Activated T-helper 2 cell treated with anti-CD3 and anti-CD28 coated beads, Interferon-gamma antibody, Interleukin-2, Interleukin-4, amounts not matched to agents 10 μg/mL and 5 μg/mL and 100 μg/mL, durations not matched to agents 14 hours and 24 hours and 36 hours (primary cell): ENCODE measurements at regions of chr5 and their contacts with region 1.

Region 1: GRCh38 chr5:143435210-143435657 is 31.7 kb upstream of the NR3C1 start:
- DNase-seq: no peak
- H3K4me3 Mint-ChIP-seq: peak overlapping the region; percentile 80
- H3K27ac Mint-ChIP-seq: peak overlapping the region; percentile 89
- H3K4me1 Mint-ChIP-seq: peaks cover 60% of the 10 kb centered on the region
- H3K27me3 Mint-ChIP-seq: no peaks in the 10 kb centered on the region

Region 2: DNA sequence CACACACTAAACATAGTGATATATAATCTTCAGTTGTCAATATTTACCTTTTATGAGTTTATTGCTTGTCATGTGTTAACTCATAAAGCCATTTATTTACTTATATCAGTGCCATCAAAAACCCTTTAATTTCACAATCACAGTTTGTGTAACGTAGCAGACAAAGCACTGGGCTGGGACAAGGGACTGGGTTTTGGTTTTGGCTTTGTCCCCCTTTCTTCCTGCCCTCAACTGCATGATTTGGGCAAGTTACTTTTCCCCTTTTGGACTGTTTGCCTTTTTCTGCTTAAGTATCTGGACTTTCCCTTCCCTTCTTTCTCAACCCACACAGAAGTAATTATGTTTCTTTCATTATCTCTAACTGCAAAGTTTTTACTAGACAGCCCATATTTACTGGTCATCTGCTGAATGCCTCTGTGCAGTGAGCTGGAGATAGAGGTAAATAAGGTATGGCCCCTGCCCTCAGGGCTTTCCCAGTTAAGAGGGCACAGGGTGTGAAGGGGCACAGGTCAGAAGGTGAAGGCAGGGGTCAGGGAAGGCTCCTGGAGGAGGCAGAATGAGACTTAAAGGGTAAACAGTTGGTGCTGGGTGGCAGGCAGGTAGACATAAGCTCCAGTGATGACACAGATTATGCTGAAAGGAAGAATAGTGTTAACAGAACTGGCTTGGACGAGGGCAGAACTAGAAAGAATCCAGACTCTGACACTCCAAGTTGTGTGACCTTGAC is 16.9 kb before region 1 on chr5:
- intact Hi-C with region 1: loop called (anchors 2 kb)
- DNase-seq: no peak
- H3K4me3 Mint-ChIP-seq: no peak overlapping the region
- H3K27ac Mint-ChIP-seq: peak overlapping the region; percentile 81
- H3K4me1 Mint-ChIP-seq: peaks cover 31% of the 10 kb centered on the region
- H3K27me3 Mint-ChIP-seq: no peaks in the 10 kb centered on the region

Region 3: GRCh38 chr5:143448518-143448917 is 13.3 kb after region 1 on chr5:
- intact Hi-C with region 1: loop called (anchors 1 kb)
- DNase-seq: no peak
- H3K4me3 Mint-ChIP-seq: no peak overlapping the region
- H3K27ac Mint-ChIP-seq: no peak overlapping the region
- H3K4me1 Mint-ChIP-seq: peaks cover 27% of the 10 kb centered on the region
- H3K27me3 Mint-ChIP-seq: no peaks in the 10 kb centered on the region

Region 4: GRCh38 chr5:143509758-143510221 is 74.6 kb after region 1 on chr5:
- intact Hi-C with region 1: loop called (anchors 5 kb)
- DNase-seq: no peak
- H3K4me3 Mint-ChIP-seq: no peak overlapping the region
- H3K27ac Mint-ChIP-seq: no peak overlapping the region
- H3K4me1 Mint-ChIP-seq: peaks cover 25% of the 10 kb centered on the region
- H3K27me3 Mint-ChIP-seq: no peaks in the 10 kb centered on the region

Region 5: DNA sequence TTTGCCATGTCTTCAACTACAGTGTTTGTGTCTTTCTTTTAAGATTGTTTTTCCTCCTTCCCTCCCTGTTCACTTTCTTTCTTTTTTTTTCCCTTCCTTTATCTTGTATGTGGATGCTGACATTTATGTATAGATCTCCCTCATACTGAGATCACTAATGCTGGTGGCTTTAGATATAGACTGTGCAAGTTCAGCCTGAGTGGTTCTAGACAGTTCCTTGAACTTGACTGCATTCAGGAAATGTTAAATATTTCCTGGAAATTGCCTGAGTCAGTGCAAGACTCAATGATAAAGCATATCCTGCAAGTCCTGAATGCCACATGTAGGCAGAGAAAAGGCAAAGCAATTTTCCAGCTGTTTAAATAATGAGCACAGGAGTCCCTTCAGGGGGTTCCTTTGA is 150.7 kb after region 1 on chr5:
- intact Hi-C with region 1: loop called (anchors 5 kb)
- DNase-seq: no peak
- H3K4me3 Mint-ChIP-seq: peak overlapping the region; percentile 6
- H3K27ac Mint-ChIP-seq: peak overlapping the region; percentile 71
- H3K4me1 Mint-ChIP-seq: peaks cover 61% of the 10 kb centered on the region
- H3K27me3 Mint-ChIP-seq: no peaks in the 10 kb centered on the region

Region 6: GRCh38 chr5:143652108-143652700 is 217.0 kb after region 1 on chr5:
- intact Hi-C with region 1: loop called (anchors 5 kb)
- DNase-seq: no peak
- H3K4me3 Mint-ChIP-seq: no peak overlapping the region
- H3K27ac Mint-ChIP-seq: no peak overlapping the region
- H3K4me1 Mint-ChIP-seq: peaks cover 21% of the 10 kb centered on the region
- H3K27me3 Mint-ChIP-seq: peaks cover 2% of the 10 kb centered on the region